Cardiac septum (tissue), 1 donor: ENCODE measurements at regions of chr11 and their contacts with region 1.

Region 1: GRCh38 chr11:65366340-65366773 is 11.8 kb downstream of the TIGD3 start:
- DNase-seq: no peak

Region 2: DNA sequence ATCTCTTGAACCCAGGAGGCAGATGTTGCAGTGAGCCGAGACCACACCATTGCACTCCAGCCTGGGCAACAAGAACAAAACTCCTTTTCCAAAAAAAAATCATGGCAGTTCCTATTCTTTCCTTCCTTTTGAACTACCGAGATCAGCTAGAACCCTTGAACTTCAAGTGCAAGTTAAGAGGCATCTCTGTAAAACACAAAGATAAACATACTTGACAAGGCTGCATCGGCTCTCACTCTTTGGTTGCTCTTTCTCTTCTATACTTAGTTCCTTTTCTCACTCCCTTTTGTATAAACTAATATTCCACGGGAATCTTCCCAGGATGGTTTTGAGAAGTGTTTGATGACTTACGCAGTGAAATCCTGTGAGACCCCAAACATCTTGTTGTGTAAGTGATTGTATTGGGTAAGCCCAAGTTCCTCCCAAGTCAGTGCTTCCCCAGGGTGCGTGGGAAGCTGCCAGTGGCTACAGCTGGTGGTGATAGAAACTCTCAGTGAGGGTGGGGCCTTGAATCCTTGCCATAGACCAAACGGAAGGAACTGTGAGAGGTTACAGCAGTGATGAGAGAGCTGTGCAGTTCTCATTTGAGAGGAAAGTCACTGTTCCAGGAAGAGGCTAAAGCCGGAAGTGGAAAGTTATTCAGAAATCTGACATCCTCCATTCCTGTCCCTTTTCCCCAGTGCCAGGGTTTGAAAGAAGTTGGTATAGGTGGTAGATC is 75.8 kb before region 1 on chr11:
- intact Hi-C with region 1: no loop called
- DNase-seq: peak; percentile 92

Region 3: DNA sequence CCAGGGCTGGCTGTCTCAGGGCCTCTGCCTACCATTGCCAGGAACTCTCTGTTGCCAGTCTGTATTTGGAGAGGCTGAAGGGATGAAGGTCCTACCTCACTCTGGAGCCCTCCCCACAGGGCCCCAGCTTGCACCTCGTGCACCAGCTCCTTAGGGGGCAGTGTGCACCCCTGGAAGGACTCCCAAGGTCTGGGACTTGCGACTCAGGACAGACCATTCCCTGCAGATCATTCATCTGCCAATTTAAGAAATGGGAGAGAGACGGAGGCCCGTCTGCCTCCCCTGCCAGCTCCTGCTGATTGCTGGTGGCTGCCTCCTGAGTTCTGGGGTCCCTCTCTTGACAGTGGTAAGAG is 105.0 kb after region 1 on chr11:
- intact Hi-C with region 1: loop called (anchors 5 kb)
- DNase-seq: peak; percentile 89